Endothelial cell of umbilical vein (primary cell): ENCODE measurements at regions of chr9 and their contacts with region 1.

Region 1: GRCh38 chr9:133023117-133023890 is 7.5 kb upstream of the GTF3C5 start:
- DNase-seq: no peak
- H3K4me3 ChIP-seq: no peak overlapping the region
- H3K27ac ChIP-seq: no peak overlapping the region
- H3K4me1 ChIP-seq: no peaks in the 10 kb centered on the region
- H3K27me3 ChIP-seq: no peaks in the 10 kb centered on the region
- CTCF ChIP-seq: no peak
- POLR2A ChIP-seq: no peak

Region 2: DNA sequence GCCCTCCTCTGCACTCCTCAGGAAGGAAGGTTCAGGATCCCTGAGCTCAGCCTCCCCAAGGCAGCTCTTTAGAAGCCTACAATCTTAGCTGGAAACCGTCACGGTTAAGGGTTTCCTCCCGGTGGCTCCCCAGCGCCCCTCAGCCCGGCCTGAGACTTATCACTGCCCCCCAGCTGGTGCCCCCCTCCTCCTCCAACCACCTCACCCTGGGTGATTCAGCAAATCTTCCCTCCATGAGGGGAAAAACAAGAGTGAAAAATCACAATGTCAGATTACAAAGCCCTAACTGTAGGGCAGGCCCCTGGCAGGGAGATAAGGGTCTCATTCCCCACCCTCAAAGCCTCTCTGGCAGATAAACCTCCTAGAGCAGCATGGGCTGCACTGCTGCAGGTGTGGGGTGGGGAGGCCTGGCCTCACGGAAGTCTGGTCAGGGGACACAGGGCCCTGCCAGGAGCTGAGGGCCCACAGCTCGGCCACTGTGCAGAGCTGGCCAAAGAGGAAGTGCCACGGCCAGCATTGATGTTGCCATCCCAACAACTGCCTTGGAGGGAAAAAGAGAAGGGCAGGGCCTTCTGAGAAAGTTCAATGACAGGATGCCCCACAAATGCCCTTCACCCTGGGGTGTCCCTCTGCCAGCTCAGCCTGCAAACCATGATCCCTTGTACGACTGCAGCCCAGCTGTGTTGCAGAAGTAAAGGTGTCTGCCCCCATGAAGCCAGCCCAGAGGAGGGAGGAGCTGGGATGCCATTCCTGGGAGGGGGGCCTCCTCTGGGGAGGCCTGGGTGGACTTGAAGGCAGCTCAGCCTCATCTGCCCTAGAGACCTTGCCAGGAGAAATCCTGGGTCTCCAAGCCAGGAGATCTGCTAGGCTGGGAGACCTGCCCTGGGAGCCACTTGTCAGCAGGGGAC is 19.0 kb before region 1 on chr9:
- CTCF ChIA-PET with region 1: interaction called, 16 read pairs
- POLR2A ChIA-PET with region 1: no interaction called
- dilution Hi-C with region 1: no loop called
- intact Hi-C with region 1: no loop called
- DNase-seq: no peak
- H3K4me3 ChIP-seq: no peak overlapping the region
- H3K27ac ChIP-seq: no peak overlapping the region
- H3K4me1 ChIP-seq: no peaks in the 10 kb centered on the region
- H3K27me3 ChIP-seq: peaks cover 5 to 6% of the 10 kb centered on the region in 2 experiments
- CTCF ChIP-seq: no peak
- POLR2A ChIP-seq: no peak

Region 3: DNA sequence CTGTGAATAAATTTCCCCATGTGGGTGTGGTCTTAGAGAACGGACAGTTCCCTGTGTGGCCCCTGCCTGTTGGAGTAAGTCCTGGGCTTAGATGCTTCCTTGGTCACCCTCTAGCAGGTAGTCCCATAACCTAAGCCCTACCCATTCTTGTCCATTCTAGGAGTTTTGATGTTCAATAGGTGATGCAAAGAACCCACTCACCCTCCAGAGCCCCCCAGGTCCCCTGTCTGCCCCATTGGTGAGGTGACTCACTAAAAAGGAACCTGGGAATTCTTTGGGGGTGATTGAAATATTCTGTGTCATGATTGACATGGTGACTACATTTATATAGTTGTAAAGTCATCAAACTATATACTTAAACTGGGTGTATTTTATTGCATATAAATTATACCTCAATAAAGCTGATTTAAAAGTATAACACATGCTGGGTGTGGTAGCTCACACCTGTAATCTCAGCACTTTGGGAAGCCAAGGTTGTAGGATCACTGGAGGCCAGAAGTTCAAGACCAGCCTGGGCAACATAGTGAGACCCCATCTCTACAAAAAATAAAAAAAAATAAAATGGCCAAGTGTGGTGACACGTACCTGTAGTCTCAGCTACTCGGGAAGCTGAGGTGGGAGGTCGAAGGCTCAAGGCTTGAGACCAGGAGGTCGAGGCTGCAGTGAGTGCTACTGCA is 13.3 kb before region 1 on chr9:
- CTCF ChIA-PET with region 1: interaction called, 30 read pairs
- POLR2A ChIA-PET with region 1: no interaction called
- dilution Hi-C with region 1: no loop called
- intact Hi-C with region 1: no loop called
- DNase-seq: no peak
- H3K4me3 ChIP-seq: no peak overlapping the region
- H3K27ac ChIP-seq: no peak overlapping the region
- H3K4me1 ChIP-seq: no peaks in the 10 kb centered on the region
- H3K27me3 ChIP-seq: peaks cover 0 to 2% of the 10 kb centered on the region in 2 experiments
- CTCF ChIP-seq: no peak
- POLR2A ChIP-seq: no peak